Activated CD4-positive, alpha-beta T cell treated with anti-CD3 and anti-CD28 coated beads, Interleukin-2, amount 10 ng/mL, durations not matched to agents 24 days and 14 days (primary cell): ENCODE measurements at regions of chr6 and their contacts with region 1.

Region 1: GRCh38 chr6:124854338-124854922 is 107.8 kb upstream of the RNF217 start:
- DNase-seq: no peak
- H3K4me3 Mint-ChIP-seq: no peak overlapping the region
- H3K27ac Mint-ChIP-seq: no peak overlapping the region
- H3K4me1 Mint-ChIP-seq: no peaks in the 10 kb centered on the region
- H3K27me3 Mint-ChIP-seq: peaks cover 2% of the 10 kb centered on the region

Region 2: DNA sequence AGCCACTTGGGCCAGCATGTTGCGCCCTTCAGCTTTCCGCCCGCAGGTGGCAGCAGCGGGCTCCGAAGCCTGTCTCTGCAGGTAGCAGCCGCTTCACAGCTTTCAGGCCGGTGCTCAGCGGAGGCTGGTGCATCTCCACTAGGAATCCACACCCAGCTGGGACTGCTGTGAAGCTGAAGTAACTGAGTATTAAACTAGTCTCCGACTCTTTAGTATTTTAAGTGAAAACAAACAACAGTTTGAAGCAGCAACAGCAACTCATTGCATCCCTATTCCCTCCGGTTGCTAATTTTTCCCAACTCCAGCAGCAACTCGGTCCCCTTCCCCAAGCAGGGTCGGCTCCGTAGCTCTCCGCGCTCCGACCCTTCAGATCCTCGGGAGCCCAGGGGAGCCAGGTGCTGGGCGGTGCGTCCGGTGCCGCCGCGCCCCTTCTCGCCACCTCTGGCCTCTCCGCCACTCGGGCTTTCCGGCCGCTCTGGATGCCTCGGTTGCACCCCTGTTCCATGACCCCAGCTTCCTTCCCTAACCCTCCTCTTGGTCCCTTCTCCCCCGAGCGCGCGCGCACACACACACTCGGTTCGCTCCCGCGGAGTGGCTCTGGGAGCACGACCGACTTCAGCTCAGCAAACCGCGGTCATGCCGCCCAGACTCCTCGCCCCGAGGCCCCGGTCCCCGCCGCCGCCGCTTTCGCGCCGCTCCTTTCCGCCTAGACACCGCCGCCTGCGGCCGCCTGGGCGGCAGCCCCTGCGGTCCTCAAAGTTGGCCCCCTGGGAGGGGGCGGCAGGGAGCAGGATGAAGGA is 1051.5 kb before region 1 on chr6:
- intact Hi-C with region 1: loop called (anchors 10 kb)
- DNase-seq: peak; percentile 91
- H3K4me3 Mint-ChIP-seq: peak overlapping the region; percentile 72
- H3K27ac Mint-ChIP-seq: no peak overlapping the region
- H3K4me1 Mint-ChIP-seq: peaks cover 5% of the 10 kb centered on the region
- H3K27me3 Mint-ChIP-seq: peaks cover 38% of the 10 kb centered on the region

Region 3: DNA sequence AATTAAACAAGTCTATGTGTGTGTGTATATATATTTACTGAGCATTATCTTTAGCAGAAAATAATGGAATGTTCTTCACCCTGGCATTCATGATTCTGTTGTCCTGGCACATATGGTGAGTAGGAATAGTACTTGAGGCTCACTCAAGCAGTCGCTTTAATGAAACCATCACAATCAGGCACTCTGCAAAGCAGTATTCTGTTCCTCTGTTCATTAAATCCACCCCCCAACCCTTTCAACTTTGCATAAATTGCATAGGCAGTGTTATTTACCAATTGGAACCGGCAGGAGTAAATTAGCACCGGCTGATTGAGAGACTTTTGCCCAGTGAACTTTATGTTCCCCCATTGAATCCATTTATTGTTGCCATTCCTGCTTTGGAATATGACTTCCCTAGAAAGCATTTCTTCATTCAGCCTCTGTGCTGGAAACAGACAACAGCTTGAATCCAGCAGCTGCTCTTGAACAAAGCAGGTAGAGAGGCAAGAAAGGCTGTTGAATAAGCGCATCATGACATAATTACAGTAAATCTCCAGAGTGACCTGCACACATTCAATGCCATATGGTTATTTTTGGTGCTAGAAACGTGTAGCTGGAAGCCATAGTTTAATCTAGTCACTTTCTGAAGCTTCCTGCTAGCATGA is 160.2 kb before region 1 on chr6:
- intact Hi-C with region 1: no loop called
- DNase-seq: no peak
- H3K4me3 Mint-ChIP-seq: no peak overlapping the region
- H3K27ac Mint-ChIP-seq: no peak overlapping the region
- H3K4me1 Mint-ChIP-seq: no peaks in the 10 kb centered on the region
- H3K27me3 Mint-ChIP-seq: no peaks in the 10 kb centered on the region